Heart right ventricle (tissue), 16 donors: ENCODE measurements at regions of chr15 and their contacts with region 1.

Region 1: DNA sequence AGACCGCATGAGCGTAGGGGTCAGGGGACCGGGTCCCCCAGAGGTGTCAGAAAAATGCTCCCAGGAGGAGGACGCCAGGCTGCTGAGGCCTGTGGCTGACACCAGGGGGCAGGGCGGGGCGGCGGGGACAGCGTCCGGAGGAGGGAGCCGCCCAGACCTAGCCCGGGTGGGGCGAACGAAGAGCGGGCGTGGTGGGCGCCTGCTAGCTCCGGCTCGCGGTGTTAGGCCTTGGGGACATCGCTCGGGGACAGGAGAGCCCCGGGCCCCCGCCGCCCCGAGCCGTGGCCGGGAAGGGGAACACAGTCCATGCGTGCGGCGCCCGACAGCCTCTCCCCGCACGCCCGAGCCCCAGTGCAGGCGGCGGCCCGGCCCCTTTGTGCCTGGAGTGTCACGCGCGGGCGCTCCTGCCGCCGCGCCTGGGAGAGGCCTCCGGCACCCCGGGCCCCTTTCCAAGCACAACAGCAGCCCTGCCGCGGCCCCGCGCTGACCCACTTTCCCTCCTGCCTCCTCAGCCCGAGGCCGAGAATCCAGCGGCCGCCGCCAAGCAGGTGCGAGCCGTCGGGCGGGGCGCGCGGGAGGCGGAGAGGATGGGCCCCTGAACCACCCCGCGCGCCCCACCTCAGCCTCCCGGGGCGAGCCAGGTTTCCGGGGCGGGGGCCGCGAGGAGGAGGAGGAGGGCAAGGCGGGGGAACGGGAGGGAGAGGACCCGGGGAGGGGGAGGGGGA is 111.0 kb upstream of the KLF13 start:
- DNase-seq: peak; percentile 86 to 91
- ATAC-seq: peak; percentile 87 to 95 (median 90)
- H3K4me3 ChIP-seq: peak overlapping the region; percentile 5 to 77 (median 62)
- H3K27ac ChIP-seq: peak overlapping the region; percentile 86 to 99 (median 95)
- H3K4me1 ChIP-seq: peaks cover 6 to 70% (median 44%) of the 10 kb centered on the region in 9 donors
- H3K27me3 ChIP-seq: no peaks in the 10 kb centered on the region
- CTCF ChIP-seq: peak; percentile 86 to 99 (median 92)

Region 2: DNA sequence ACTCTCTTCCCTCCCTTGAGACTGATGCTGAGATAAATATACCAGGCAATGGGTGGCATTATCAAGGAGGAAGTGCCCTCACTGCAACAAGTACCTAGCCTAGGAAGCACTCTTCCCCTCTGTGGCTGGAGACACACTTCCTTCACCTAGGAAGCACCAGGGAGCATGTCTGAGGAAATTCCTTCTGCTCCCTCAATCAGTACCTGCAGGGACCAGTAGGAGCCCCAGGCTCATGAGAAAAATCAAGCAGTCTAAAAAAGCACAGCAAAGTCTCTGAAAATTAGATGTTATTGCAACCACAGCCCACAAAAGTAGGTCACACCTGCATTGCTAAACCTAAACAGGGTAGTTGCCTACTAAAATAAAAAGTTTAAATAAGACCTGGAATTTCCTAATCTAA is 36.0 kb before region 1 on chr15:
- intact Hi-C with region 1: no loop called
- DNase-seq: no peak
- ATAC-seq: no peak
- H3K4me3 ChIP-seq: no peak overlapping the region
- H3K27ac ChIP-seq: no peak overlapping the region
- H3K4me1 ChIP-seq: no peaks in the 10 kb centered on the region
- H3K27me3 ChIP-seq: no peaks in the 10 kb centered on the region
- CTCF ChIP-seq: no peak

Region 3: GRCh38 chr15:31236184-31237042 is 20.8 kb after region 1 on chr15:
- intact Hi-C with region 1: loop called in 2 of 10 experiments (anchors 1 to 2 kb)
- DNase-seq: peak; percentile 74 to 92
- ATAC-seq: peak; percentile 84 to 96 (median 94)
- H3K4me3 ChIP-seq: peak overlapping the region in 5 of 10 donors; percentile 14 to 30 (median 20)
- H3K27ac ChIP-seq: peak overlapping the region; percentile 69 to 97 (median 85)
- H3K4me1 ChIP-seq: peaks cover 12 to 50% (median 37%) of the 10 kb centered on the region in 9 donors
- H3K27me3 ChIP-seq: no peaks in the 10 kb centered on the region
- CTCF ChIP-seq: no peak

Region 4: DNA sequence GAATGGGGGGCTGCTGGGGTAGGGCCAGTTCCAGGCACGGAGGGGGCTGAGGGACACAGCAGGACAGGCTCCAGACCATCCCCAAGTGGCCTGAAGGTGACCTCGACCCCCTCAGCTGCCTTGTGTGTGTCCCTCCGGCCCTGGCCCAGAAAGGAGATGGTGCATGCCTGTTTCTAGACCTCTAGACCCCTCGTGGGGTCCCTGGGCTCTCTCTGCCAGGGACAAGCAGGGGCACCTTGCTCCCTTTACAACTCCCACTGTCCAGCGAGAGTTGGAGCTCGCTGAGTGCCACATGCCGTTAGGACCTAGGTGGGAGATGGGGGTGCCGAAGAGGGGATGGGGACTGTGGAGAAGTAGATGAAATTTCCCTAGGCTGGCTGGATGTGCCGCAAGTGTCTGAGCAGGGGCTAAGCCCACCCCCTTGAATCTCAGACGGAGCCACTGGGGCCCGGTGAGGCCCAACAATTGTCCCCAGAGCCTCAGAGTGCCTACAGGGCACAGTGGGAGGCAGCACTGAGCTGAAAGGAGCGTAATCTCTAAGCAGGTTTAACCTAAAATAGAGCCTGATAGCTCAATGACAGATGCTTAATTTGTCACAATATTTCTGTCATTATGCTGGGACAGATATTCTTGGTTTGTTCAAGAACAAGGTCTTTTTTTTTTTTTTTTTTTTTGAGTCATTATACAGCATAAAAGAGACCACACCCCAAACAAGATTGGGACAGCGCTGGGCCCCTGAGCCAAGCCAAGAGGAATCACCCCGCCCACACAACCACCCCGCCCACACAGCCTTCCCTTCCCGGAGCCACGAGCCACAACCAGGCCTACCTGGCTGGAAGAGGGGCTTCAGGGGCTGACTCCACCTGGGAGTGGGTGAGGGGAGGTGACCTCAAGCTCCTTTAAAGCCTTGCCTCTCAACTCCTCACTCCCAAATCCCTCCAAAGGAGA is 87.4 kb after region 1 on chr15:
- intact Hi-C with region 1: loop called in 3 of 10 experiments (anchors 2 to 5 kb)
- DNase-seq: peak; percentile 40 to 60
- ATAC-seq: peak in 6 of 8 donors; percentile 22 to 60 (median 50)
- H3K4me3 ChIP-seq: no peak overlapping the region
- H3K27ac ChIP-seq: peak overlapping the region in 2 of 10 donors; percentile 35 to 47
- H3K4me1 ChIP-seq: peaks cover 0 to 80% (median 63%) of the 10 kb centered on the region in 9 donors
- H3K27me3 ChIP-seq: peaks cover 0 to 3% (median 0%) of the 10 kb centered on the region in 7 donors
- CTCF ChIP-seq: peak in 6 of 9 donors; percentile 16 to 30 (median 26)

Region 5: GRCh38 chr15:31391687-31392671 is 176.3 kb after region 1 on chr15:
- intact Hi-C with region 1: loop called in 5 of 10 experiments (anchors 2 to 10 kb)
- DNase-seq: peak; percentile 87 to 92
- ATAC-seq: peak; percentile 79 to 87 (median 84)
- H3K4me3 ChIP-seq: peak overlapping the region; percentile 51 to 74 (median 68)
- H3K27ac ChIP-seq: peak overlapping the region; percentile 89 to 99 (median 98)
- H3K4me1 ChIP-seq: peaks cover 0 to 39% (median 28%) of the 10 kb centered on the region in 9 donors
- H3K27me3 ChIP-seq: peaks cover 0 to 11% (median 0%) of the 10 kb centered on the region in 7 donors
- CTCF ChIP-seq: no peak

Region 6: GRCh38 chr15:31402511-31403056 is 186.9 kb after region 1 on chr15:
- intact Hi-C with region 1: loop called in 5 of 10 experiments (anchors 5 to 10 kb)
- DNase-seq: peak; percentile 75 to 76
- ATAC-seq: peak; percentile 62 to 86 (median 78)
- H3K4me3 ChIP-seq: no peak overlapping the region
- H3K27ac ChIP-seq: peak overlapping the region; percentile 24 to 73 (median 66)
- H3K4me1 ChIP-seq: peaks cover 12 to 58% (median 26%) of the 10 kb centered on the region in 9 donors
- H3K27me3 ChIP-seq: no peaks in the 10 kb centered on the region
- CTCF ChIP-seq: no peak

Region 7: DNA sequence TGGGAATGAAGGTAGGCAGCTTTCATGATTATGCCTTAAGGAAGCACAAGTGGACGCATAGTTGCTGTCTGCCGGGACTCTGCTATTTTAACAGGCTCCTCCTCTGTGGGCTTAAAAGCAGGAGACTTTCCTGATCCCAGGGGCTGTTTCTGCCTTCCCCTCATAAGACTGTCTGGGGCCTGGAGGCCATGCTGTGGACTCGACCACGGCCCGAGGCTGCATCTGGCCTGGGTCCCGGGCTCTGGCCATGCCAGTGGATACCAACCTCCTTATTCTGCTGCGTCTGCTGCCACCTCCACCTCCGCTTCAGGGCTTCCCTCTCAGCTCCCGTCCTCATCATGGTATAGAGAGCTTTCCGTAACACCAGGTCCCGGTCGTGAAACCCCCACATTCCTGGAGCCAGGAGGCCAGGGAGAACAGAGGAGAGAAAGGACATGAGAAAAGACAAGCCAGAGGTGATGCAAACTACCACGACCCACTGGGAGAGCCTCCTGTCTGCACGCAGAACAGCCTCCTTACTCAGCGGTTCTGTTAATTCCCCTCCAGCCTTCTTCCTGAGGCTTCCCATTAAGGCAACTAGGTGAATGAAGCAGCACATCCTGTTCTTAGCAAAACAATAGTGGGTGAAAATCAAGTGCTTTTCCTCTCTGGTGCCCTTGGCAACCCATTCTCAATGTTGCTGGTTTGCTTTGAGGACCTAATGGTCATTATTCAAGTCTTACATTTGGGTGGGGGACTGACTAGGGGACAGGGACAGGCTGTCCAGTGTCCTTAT is 311.5 kb after region 1 on chr15:
- intact Hi-C with region 1: no loop called
- DNase-seq: no peak
- ATAC-seq: peak in 3 of 8 donors; percentile 49 to 79 (median 59)
- H3K4me3 ChIP-seq: no peak overlapping the region
- H3K27ac ChIP-seq: no peak overlapping the region
- H3K4me1 ChIP-seq: peaks cover 0 to 11% (median 0%) of the 10 kb centered on the region in 9 donors
- H3K27me3 ChIP-seq: no peaks in the 10 kb centered on the region
- CTCF ChIP-seq: no peak